A673 (cell line): ENCODE measurements at regions of chr12 and their contacts with region 1.

Region 1: GRCh38 chr12:94353130-94353529 is 106.5 kb downstream of the CEP83 start:
- DNase-seq: no peak
- H3K4me3 ChIP-seq: no peak overlapping the region
- H3K27ac ChIP-seq: no peak overlapping the region
- H3K4me1 ChIP-seq: no peaks in the 10 kb centered on the region
- H3K27me3 ChIP-seq: no peaks in the 10 kb centered on the region
- CTCF ChIP-seq: no peak

Region 2: GRCh38 chr12:94340573-94340972 is 12.6 kb before region 1 on chr12:
- CTCF ChIA-PET with region 1: no interaction called
- POLR2A ChIA-PET with region 1: no interaction called
- intact Hi-C with region 1: loop called (anchors 1 kb)
- DNase-seq: no peak
- H3K4me3 ChIP-seq: no peak overlapping the region
- H3K27ac ChIP-seq: no peak overlapping the region
- H3K4me1 ChIP-seq: no peaks in the 10 kb centered on the region
- H3K27me3 ChIP-seq: no peaks in the 10 kb centered on the region
- CTCF ChIP-seq: no peak

Region 3: GRCh38 chr12:94498073-94498472 is 144.9 kb after region 1 on chr12:
- CTCF ChIA-PET with region 1: no interaction called
- POLR2A ChIA-PET with region 1: no interaction called
- intact Hi-C with region 1: no loop called
- DNase-seq: no peak
- H3K4me3 ChIP-seq: no peak overlapping the region
- H3K27ac ChIP-seq: no peak overlapping the region
- H3K4me1 ChIP-seq: no peaks in the 10 kb centered on the region
- H3K27me3 ChIP-seq: no peaks in the 10 kb centered on the region
- CTCF ChIP-seq: no peak